K562 (cell line): ENCODE measurements at regions of chr17 and their contacts with region 1.

Region 1: DNA sequence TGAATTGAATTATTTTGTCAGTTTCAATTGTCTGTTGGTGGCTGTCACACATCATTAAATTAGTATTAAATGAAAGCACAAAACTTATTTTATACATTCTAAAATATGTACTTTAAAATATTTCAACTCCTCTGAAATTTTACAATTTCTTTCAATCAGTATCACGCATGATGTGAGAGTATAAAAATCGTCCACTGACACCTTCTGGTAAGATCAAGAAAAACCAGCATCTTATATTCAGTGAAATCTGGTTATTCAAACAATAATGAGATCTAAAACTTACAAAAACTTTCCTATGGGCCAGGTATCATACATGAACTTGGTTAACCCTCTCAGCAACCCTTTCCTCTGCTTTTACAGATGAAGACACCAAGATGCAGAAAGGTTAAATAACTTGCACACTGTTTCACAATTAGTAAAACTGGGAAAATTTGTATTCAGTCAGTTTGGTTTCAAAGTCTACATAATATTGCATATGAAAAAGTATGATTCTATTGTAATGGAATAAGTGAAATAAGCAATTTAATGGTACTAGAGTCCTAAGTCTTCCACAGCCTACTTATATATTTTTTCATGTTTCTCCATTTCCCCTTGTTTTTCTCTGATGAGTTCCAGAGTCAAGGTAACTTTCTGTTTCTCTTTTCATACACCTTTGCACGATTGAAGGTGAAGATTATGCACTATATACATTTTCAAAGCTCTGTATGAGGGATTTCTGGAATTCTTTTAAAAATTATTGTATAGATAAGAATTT is 58.7 kb downstream of the EFCAB5 start:
- DNase-seq: no peak
- ATAC-seq: no peak
- H3K4me3 ChIP-seq: no peak overlapping the region
- H3K27ac ChIP-seq: no peak overlapping the region
- H3K4me1 ChIP-seq: no peaks in the 10 kb centered on the region
- H3K27me3 ChIP-seq: no peaks in the 10 kb centered on the region; a peak in 1 of 5 replicates
- CTCF ChIP-seq: peak in 1 of 3 experiments; percentile 24; a peak in 1 of 6 replicates
- EP300 ChIP-seq: no peak
- POLR2A ChIP-seq: no peak
- RAD21 ChIP-seq: no peak

Region 2: DNA sequence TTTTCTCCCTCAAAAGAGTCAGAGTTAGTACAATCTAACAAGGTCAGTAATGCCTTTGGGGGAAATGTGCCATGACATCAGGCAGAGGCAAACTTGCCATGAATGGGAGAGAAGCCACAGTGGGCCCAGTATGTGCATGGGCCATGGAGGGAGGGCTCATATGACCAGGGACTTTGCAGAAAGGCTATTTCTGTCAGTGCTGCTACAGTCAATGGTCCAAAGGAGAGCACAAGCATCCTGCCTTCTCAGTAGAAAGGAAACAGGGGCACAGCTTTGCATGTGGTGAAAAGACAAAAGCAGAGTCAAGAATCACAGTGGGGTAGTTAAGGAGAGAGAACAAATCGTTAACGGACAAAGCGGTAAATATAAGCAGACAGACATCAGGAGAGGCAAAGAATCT is 366.3 kb before region 1 on chr17:
- CTCF ChIA-PET with region 1: no interaction called
- POLR2A ChIA-PET with region 1: no interaction called
- in situ Hi-C with region 1: no loop called
- intact Hi-C with region 1: loop called (anchors 10 kb)
- DNase-seq: no peak
- ATAC-seq: no peak
- H3K4me3 ChIP-seq: no peak overlapping the region
- H3K27ac ChIP-seq: no peak overlapping the region
- H3K4me1 ChIP-seq: peaks cover 4 to 11% of the 10 kb centered on the region in 2 experiments; a peak in 2 of 5 replicates
- H3K27me3 ChIP-seq: no peaks in the 10 kb centered on the region
- CTCF ChIP-seq: no peak
- EP300 ChIP-seq: no peak
- POLR2A ChIP-seq: no peak
- RAD21 ChIP-seq: no peak